Aorta (tissue), 5 donors: ENCODE measurements at regions of chr3 and their contacts with region 1.

Region 1: GRCh38 chr3:129316131-129317013 is 37.7 kb downstream of the HMCES start:
- DNase-seq: peak; percentile 89 to 95
- ATAC-seq: peak; percentile 79
- H3K4me3 ChIP-seq: peak overlapping the region; percentile 75 to 84
- H3K27ac ChIP-seq: peak overlapping the region; percentile 15 to 53
- H3K4me1 ChIP-seq: no peaks in the 10 kb centered on the region
- H3K27me3 ChIP-seq: no peaks in the 10 kb centered on the region

Region 2: DNA sequence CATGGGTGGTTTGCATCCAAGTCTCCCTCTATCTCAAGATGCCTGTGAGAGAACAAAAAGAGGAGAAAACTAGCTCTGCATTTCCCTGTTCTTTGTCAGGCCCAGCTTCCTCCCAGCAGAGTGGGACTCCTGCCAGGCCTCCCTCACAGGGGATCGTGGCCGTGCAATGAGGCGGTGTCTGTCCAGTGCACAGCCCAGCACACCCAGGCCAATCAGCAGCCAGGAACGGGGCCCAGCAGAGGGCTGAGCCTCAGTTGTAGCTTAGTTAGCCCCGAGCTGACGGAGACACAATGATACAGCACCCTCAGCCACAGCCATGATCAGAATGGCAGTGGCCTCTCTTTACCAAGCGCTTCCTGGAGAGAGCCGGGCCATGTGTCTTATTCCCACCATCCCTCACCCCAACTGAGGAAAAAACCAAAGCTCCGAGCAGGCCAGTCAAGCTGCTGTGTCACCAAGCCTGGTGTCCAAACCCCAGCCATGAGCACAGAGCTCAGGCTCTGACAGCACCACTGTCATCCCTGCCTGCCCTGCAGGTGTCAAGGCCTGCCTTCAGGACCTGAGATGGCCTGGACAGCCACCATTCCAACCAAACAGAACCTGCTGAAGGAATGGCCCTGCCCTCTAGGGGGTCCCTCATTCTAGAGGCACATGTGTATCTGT is 920.7 kb before region 1 on chr3:
- intact Hi-C with region 1: no loop called
- DNase-seq: peak in 1 of 2 donors; percentile 70
- ATAC-seq: peak; percentile 63
- H3K4me3 ChIP-seq: no peak overlapping the region
- H3K27ac ChIP-seq: no peak overlapping the region
- H3K4me1 ChIP-seq: no peaks in the 10 kb centered on the region
- H3K27me3 ChIP-seq: no peaks in the 10 kb centered on the region

Region 3: GRCh38 chr3:129278439-129278970 is 37.9 kb before region 1 on chr3 and contains the start of gene HMCES:
- intact Hi-C with region 1: loop called (anchors 1 to 5 kb)
- DNase-seq: peak; percentile 96 to 98
- ATAC-seq: peak; percentile 98
- H3K4me3 ChIP-seq: peak within 1 kb of the TSS; percentile 68 to 76
- H3K27ac ChIP-seq: peak within 1 kb of the TSS in 1 of 2 donors; percentile 49
- H3K4me1 ChIP-seq: no peaks in the 10 kb centered on the region
- H3K27me3 ChIP-seq: no peaks in the 10 kb centered on the region
- total RNA-seq, gene HMCES: 24.3 to 31.9 TPM

Region 4: DNA sequence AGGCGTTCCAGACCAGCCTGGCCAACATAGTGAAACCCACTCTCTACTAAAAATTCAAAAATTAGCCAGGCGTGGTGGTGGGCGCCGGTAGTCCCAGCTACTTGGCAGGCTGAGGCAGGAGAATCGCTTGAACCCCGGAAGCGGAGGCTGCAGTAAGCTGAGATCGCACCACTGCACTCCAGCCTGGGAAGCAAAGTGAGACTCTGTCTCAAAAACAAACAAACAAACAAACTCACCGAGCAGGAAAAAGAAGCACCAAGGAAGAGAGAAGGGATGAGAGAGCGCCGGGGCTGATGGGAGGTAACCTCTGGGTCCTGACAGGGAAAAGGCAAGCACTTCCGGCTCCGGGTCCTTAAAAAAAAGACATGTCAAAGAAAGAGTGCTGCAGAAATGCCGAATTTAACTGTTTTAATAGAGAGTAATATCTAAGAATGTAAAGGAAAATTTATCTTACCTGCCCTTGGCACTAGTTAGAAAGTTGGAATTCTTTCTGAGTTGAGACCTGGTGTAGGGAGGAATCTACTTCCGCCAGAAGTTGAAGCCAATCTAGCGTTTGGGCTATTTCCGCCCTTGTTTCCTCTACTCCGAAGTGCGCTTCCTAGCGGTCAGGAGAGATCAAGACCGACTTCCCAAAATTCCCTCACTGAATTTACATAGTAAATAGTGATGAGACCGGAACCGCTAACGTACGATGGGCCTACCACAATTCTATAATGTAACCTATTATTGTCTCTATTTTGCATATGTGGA is 82.9 kb after region 1 on chr3:
- intact Hi-C with region 1: no loop called
- DNase-seq: peak; percentile 85 to 90
- ATAC-seq: peak; percentile 94
- H3K4me3 ChIP-seq: peak overlapping the region; percentile 45 to 75
- H3K27ac ChIP-seq: peak overlapping the region; percentile 11 to 20
- H3K4me1 ChIP-seq: no peaks in the 10 kb centered on the region
- H3K27me3 ChIP-seq: no peaks in the 10 kb centered on the region